Lower leg skin (tissue), 4 donors: ENCODE measurements at regions of chr5 and their contacts with region 1.

Region 1: GRCh38 chr5:122704243-122705036 is 70.4 kb upstream of the SNX2 start:
- DNase-seq: no peak
- H3K4me3 ChIP-seq: no peak overlapping the region
- CTCF ChIP-seq: no peak
- POLR2A ChIP-seq: no peak

Region 2: GRCh38 chr5:122845229-122846050 is 141.0 kb after region 1 on chr5 and contains the start of gene SNX24:
- intact Hi-C with region 1: loop called (anchors 5 kb)
- DNase-seq: peak; percentile 78 to 96
- H3K4me3 ChIP-seq: peak within 1 kb of the TSS; percentile 84
- CTCF ChIP-seq: no peak
- POLR2A ChIP-seq: no peak
- total RNA-seq, gene SNX24: 20.1 to 28.1 (median 20.9) TPM

Region 3: DNA sequence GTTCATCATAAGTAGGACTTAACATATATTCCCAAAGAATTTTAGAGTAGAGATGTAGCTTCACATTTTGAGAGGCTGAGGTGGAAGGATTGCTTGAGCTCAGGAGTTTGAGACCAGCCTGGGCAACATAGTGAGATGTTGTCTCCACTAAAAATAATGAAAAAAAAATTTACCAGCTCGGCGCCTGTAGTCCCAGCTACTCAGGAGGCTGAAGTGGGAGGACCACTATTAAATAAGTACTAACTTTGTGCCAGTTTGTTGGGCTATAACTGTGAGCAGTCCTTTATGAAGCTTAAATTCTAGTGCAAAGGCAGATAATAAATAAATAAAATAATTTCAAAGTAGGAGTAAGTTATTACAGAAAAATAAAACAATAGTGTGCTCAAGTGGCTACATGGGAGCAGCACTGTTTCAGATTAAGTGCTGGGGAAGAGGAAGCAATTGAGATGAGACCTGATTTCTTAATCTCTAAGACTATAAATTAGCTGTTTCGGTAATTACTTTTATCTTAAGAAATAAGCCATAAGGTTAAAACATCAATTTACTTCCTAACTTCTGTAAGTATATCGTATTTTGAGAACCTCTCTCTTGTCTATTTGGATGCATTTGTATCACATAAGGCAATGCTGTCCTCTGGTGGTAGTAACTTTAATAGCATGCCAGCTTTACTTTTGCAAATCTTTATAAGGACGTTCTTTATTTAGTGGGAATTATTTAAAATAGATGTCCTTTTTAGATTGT is 906.4 kb after region 1 on chr5:
- intact Hi-C with region 1: loop called (anchors 10 kb)
- DNase-seq: peak in 1 of 2 donors; percentile 21
- H3K4me3 ChIP-seq: no peak overlapping the region
- CTCF ChIP-seq: peak in 1 of 3 donors; percentile 85
- POLR2A ChIP-seq: no peak